ENCODE measurements at regions of chr14 and their contacts with region 1.

Region 1: DNA sequence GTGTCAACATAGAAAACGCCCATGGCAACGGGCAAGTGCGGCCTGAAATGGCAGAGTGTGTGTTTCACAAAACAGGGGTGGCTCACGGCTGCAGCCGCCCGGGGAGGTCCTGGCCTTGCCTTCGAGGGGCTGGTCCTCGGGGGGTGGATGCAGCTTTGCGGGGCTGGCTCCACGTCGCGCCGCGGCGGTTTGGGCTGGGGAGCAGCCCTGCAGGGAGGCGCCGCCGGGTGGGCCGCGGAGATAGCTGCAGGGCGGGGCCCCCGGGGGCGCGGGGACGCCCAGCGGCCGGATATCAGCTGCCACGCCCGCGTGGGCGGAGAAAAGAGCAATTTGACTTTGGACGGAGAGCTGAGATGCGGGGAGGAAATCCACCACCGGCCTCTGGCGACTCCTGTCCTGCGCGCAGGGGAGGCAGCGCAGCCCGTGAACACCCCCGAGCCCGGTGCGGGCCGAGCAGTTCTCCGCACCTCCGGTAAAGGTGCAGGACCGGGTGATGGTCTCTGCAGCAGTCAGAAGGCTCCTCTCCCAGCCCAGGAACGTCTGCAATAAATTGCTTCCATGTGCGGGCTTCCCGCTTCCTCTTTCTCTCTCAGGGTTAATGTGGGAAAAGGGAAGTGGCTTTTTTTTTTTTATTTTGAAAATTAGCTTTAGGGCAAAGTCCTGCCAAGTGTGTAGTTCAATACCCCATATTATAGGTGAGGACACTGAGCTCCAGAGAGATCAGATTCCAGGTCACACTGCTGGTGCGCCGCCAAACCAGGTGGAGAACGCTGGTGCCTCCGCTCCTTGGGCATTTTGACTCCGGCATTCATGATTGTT is 110.5 kb downstream of the ARF6 start:
- DNase-seq: peak; percentile 90
- ATAC-seq: peak; percentile 29
- H3K4me3 Mint-ChIP-seq: peak overlapping the region; percentile 87
- H3K27ac Mint-ChIP-seq: peak overlapping the region; percentile 96
- H3K4me1 Mint-ChIP-seq: peaks cover 67% of the 10 kb centered on the region
- H3K27me3 Mint-ChIP-seq: no peaks in the 10 kb centered on the region

Region 2: GRCh38 chr14:49879683-49880204 is 123.7 kb before region 1 on chr14:
- CTCF ChIA-PET with region 1: interaction called, 19 read pairs
- DNase-seq: peak; percentile 83
- ATAC-seq: peak; percentile 96
- H3K4me3 Mint-ChIP-seq: no peak overlapping the region
- H3K27ac Mint-ChIP-seq: peak overlapping the region; percentile 52
- H3K4me1 Mint-ChIP-seq: peaks cover 24% of the 10 kb centered on the region
- H3K27me3 Mint-ChIP-seq: no peaks in the 10 kb centered on the region

Region 3: DNA sequence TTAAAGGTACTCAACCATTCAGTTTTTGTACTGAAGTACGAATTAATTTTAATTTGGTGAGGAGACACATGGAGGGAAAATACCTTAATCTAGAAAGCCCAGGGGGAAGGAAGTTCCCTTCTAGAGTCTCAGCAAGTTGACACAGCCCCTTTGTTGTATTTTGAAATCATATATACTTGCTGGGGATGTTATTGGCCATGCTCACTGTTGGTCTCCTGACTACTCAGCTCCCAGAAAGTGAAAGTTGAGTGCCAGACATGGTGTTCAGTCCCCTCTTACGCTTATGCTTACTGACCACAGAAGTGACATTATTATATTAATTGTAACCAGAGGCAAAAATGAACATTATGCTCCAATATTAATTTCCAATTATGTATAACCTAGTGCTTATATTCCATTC is 82.5 kb before region 1 on chr14:
- CTCF ChIA-PET with region 1: no interaction called
- DNase-seq: no peak
- ATAC-seq: no peak
- H3K4me3 Mint-ChIP-seq: no peak overlapping the region
- H3K27ac Mint-ChIP-seq: no peak overlapping the region
- H3K4me1 Mint-ChIP-seq: peaks cover 7% of the 10 kb centered on the region
- H3K27me3 Mint-ChIP-seq: no peaks in the 10 kb centered on the region

Region 4: GRCh38 chr14:49946320-49947141 is 56.9 kb before region 1 on chr14:
- CTCF ChIA-PET with region 1: interaction called, 11 read pairs
- DNase-seq: peak; percentile 46
- ATAC-seq: peak; percentile 59
- H3K4me3 Mint-ChIP-seq: peak overlapping the region; percentile 30
- H3K27ac Mint-ChIP-seq: peak overlapping the region; percentile 94
- H3K4me1 Mint-ChIP-seq: peaks cover 67% of the 10 kb centered on the region
- H3K27me3 Mint-ChIP-seq: no peaks in the 10 kb centered on the region

Region 5: GRCh38 chr14:50038398-50039119 is 35.1 kb after region 1 on chr14:
- CTCF ChIA-PET with region 1: interaction called, 50 read pairs
- DNase-seq: peak; percentile 86
- ATAC-seq: peak; percentile 74
- H3K4me3 Mint-ChIP-seq: peak overlapping the region; percentile 78
- H3K27ac Mint-ChIP-seq: peak overlapping the region; percentile 98
- H3K4me1 Mint-ChIP-seq: peaks cover 78% of the 10 kb centered on the region
- H3K27me3 Mint-ChIP-seq: no peaks in the 10 kb centered on the region

Region 6: GRCh38 chr14:50060871-50061663 is 57.6 kb after region 1 on chr14:
- CTCF ChIA-PET with region 1: interaction called, 62 read pairs
- DNase-seq: peak; percentile 81
- ATAC-seq: peak; percentile 25
- H3K4me3 Mint-ChIP-seq: peak overlapping the region; percentile 92
- H3K27ac Mint-ChIP-seq: peak overlapping the region; percentile 100
- H3K4me1 Mint-ChIP-seq: peaks cover 82% of the 10 kb centered on the region
- H3K27me3 Mint-ChIP-seq: no peaks in the 10 kb centered on the region

Region 7: GRCh38 chr14:50099335-50099734 is 95.9 kb after region 1 on chr14:
- CTCF ChIA-PET with region 1: interaction called, 20 read pairs
- DNase-seq: no peak
- ATAC-seq: no peak
- H3K4me3 Mint-ChIP-seq: no peak overlapping the region
- H3K27ac Mint-ChIP-seq: no peak overlapping the region
- H3K4me1 Mint-ChIP-seq: peaks cover 55% of the 10 kb centered on the region
- H3K27me3 Mint-ChIP-seq: peaks cover 5% of the 10 kb centered on the region

Region 8: DNA sequence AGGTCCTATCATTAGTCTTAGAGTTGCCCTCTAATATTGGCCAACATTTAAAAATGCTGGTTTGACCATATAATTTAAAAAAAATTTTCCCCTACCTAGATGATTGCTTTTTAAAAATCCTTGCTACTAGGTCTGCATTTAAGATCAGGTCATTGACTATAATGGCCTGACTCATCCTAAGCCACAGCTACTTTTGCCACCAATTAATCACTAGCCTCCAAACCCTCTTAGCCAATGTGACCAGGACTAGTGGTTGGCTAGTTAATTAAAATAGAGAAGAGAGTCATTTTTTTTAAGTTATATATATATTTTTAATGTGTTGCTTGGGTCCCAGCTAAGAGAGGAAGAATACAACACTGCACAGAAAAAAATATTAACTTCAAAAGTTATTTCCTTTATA is 170.5 kb after region 1 on chr14:
- CTCF ChIA-PET with region 1: no interaction called
- DNase-seq: no peak
- ATAC-seq: no peak
- H3K4me3 Mint-ChIP-seq: no peak overlapping the region
- H3K27ac Mint-ChIP-seq: no peak overlapping the region
- H3K4me1 Mint-ChIP-seq: peaks cover 2% of the 10 kb centered on the region
- H3K27me3 Mint-ChIP-seq: no peaks in the 10 kb centered on the region

Measured in activated CD8-positive, alpha-beta memory T cell treated with anti-CD3 and anti-CD28 coated beads, Interleukin-2, amount 10 ng/mL, durations not matched to agents 7 days and 5 days (primary cell).